WTC11 (cell line): ENCODE measurements at regions of chr6 and their contacts with region 1.

Region 1: GRCh38 chr6:53492860-53493634 is 51.9 kb downstream of the GCLC start:
- DNase-seq: peak; percentile 11
- ATAC-seq: peak; percentile 69
- H3K4me3 Mint-ChIP-seq: no peak overlapping the region
- H3K27ac Mint-ChIP-seq: no peak overlapping the region
- H3K4me1 Mint-ChIP-seq: no peaks in the 10 kb centered on the region
- H3K27me3 Mint-ChIP-seq: no peaks in the 10 kb centered on the region; the same call in 1 of the 2 replicates
- CTCF ChIP-seq: 0 out of 2 replicates have a peak, but pooled peaks have one; percentile 26

Region 2: DNA sequence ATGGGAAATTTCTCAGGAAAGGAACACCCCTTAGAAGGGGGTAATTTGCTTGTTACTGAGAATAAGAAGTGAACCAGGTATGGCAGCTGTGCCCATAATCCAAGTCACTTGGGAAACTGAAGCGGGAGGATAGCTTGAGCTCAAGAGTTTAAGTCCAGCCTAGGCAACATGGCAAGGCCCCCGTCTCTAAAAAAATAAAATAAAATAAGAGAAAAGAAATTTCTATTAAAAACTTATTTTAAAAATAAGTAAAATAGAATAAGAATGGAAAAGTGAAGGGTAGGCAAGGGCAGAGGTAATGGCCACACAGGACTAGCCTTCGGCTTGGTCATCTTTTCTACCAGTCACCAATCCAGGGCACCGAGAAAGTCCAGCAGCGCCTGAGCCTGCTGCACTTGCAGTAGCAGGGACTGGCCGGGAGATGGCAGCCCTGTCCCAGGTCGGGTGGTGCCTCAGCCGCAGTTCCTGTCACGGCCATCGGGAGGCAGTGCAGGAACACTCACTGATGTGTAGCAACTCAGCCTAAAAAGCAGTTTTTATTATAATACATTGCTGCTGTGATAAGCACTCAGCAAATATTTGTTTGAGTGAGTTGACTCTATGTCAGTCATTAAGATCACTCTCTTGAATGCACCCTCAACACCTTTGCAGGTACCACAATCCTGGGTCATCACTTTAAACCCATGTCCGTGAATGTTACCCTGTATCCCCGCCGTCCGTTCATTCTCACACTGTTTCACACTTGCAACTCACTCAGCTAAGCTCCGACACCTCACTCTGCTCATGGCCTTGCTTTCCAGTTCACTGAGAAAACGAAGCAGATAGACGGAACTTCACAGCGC is 321.2 kb before region 1 on chr6:
- CTCF ChIA-PET with region 1: interaction called, 11 read pairs
- POLR2A ChIA-PET with region 1: no interaction called
- DNase-seq: peak; percentile 87
- ATAC-seq: peak; percentile 93
- H3K4me3 Mint-ChIP-seq: no peak overlapping the region
- H3K27ac Mint-ChIP-seq: no peak overlapping the region
- H3K4me1 Mint-ChIP-seq: peaks cover 6% of the 10 kb centered on the region
- H3K27me3 Mint-ChIP-seq: no peaks in the 10 kb centered on the region
- CTCF ChIP-seq: peak; percentile 100

Region 3: DNA sequence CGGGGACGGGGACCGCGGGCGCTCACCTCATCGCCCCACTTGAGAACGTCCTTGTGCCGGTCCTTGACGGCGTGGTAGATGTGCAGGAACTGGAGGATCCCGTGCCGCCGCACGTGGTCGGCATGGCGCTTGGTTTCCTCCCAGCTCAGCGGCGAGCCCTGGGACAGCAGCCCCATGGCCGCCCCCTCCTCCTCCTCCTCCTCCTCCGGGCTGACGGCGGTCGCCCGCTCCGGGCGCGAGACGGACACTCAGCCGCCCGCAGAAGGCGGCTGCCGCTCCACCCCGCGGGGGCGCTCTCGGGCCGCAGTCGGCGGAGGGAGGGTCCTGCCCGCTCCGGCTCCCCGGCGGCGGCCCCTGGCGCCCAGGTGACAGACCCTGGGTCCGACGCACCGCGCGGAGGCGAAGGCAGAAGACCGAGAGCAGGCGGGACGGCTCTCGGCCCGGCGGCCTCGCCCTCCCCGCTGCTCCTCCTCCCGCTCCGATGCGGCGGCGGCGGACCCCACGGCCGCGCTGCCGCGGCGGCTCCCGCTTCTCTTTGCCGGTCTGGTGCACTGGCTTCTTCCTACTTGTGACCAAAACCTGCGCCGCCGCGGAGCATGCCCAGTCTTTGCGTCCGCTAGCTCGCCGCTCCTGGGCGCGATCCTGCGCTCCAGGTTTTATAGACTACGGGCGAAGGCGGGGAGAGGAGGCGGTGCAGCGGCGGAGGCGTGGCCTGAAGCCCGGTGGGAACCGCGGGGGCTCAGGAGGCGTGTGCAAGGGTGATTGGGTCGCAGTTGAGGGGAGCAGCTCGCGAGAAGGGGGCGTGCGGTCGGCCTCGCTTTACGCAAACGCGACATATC is 51.6 kb after region 1 on chr6 and contains the start of gene GCLC:
- CTCF ChIA-PET with region 1: interaction called, 13 read pairs
- POLR2A ChIA-PET with region 1: no interaction called
- DNase-seq: peak; percentile 94
- ATAC-seq: peak; percentile 69
- H3K4me3 Mint-ChIP-seq: peak within 1 kb of the TSS; percentile 99
- H3K27ac Mint-ChIP-seq: peak within 1 kb of the TSS; percentile 96
- H3K4me1 Mint-ChIP-seq: peaks cover 65% of the 10 kb centered on the region
- H3K27me3 Mint-ChIP-seq: peaks cover 25% of the 10 kb centered on the region
- CTCF ChIP-seq: peak; percentile 72
- total RNA-seq, gene GCLC: 33.8 to 47.1 TPM (median 38.6 TPM) in 3 replicates

Region 4: DNA sequence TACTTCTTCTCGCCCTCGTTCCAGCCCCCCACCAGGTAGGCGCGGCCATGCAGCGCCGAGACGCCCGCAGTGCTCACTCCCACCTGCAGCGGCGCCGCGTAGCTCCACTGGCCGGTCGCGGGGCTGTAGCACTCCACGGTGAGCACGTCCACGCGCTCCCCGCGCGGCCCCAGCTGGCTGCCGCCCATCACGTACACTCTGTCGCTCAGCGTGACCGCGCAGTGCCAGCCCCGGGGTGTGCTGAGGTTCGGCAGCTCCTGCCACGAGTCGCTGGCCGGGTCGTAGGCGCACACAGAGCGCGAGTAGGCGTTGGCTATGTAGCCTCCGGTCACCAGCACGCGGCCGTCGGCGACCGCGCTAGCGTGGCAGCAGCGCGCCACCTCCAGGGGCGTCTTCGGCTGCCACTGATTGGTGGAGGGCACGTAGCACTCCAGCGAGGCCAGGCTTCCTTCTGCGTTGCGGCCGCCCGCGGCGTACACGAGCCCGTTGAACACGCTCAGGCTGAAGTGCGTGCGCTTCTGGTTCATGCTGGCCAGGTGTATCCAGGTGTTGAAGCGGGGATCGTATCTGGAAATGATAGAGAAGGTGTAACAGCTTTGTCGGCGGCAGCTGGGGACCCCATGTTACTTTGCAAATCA is 158.8 kb after region 1 on chr6:
- CTCF ChIA-PET with region 1: interaction called, 33 read pairs
- POLR2A ChIA-PET with region 1: no interaction called
- DNase-seq: peak; percentile 71
- ATAC-seq: peak; percentile 93
- H3K4me3 Mint-ChIP-seq: peak overlapping the region; percentile 79
- H3K27ac Mint-ChIP-seq: no peak overlapping the region
- H3K4me1 Mint-ChIP-seq: peaks cover 6% of the 10 kb centered on the region
- H3K27me3 Mint-ChIP-seq: peaks cover 20% of the 10 kb centered on the region
- CTCF ChIP-seq: no peak; the same call in 1 of the 2 replicates

Region 5: GRCh38 chr6:53679446-53679933 is 186.4 kb after region 1 on chr6:
- CTCF ChIA-PET with region 1: interaction called, 17 read pairs
- POLR2A ChIA-PET with region 1: no interaction called
- DNase-seq: peak; percentile 15
- ATAC-seq: peak; percentile 86
- H3K4me3 Mint-ChIP-seq: no peak overlapping the region
- H3K27ac Mint-ChIP-seq: no peak overlapping the region
- H3K4me1 Mint-ChIP-seq: peaks cover 11% of the 10 kb centered on the region
- H3K27me3 Mint-ChIP-seq: no peaks in the 10 kb centered on the region
- CTCF ChIP-seq: no peak; the same call in 1 of the 2 replicates

Region 6: GRCh38 chr6:53725791-53726431 is 232.9 kb after region 1 on chr6:
- CTCF ChIA-PET with region 1: interaction called, 39 read pairs
- POLR2A ChIA-PET with region 1: no interaction called
- DNase-seq: peak; percentile 86
- ATAC-seq: peak; percentile 72
- H3K4me3 Mint-ChIP-seq: no peak overlapping the region
- H3K27ac Mint-ChIP-seq: no peak overlapping the region
- H3K4me1 Mint-ChIP-seq: peaks cover 43% of the 10 kb centered on the region
- H3K27me3 Mint-ChIP-seq: no peaks in the 10 kb centered on the region
- CTCF ChIP-seq: peak; percentile 87

Region 7: GRCh38 chr6:53734473-53735299 is 241.6 kb after region 1 on chr6:
- CTCF ChIA-PET with region 1: interaction called, 12 read pairs
- POLR2A ChIA-PET with region 1: no interaction called
- DNase-seq: peak; percentile 72
- ATAC-seq: peak; percentile 99
- H3K4me3 Mint-ChIP-seq: no peak overlapping the region
- H3K27ac Mint-ChIP-seq: no peak overlapping the region
- H3K4me1 Mint-ChIP-seq: peaks cover 35% of the 10 kb centered on the region
- H3K27me3 Mint-ChIP-seq: no peaks in the 10 kb centered on the region
- CTCF ChIP-seq: peak; percentile 33; the same call in 1 of the 2 replicates